ENCODE measurements at regions of chr2 and their contacts with region 1.

Region 1: GRCh38 chr2:68751397-68752339 is 17.1 kb downstream of the ARHGAP25 start:
- DNase-seq: peak; percentile 82 to 93 (median 89)
- H3K4me3 ChIP-seq: peak overlapping the region; percentile 11
- H3K4me3 Mint-ChIP-seq: peak overlapping the region; percentile 5 to 67 (median 50)
- H3K27ac ChIP-seq: no peak overlapping the region
- H3K27ac Mint-ChIP-seq: peak overlapping the region; percentile 66 to 97 (median 92)
- H3K4me1 ChIP-seq: peaks cover 91% of the 10 kb centered on the region
- H3K4me1 Mint-ChIP-seq: peaks cover 85 to 95% (median 94%) of the 10 kb centered on the region in 3 donors
- H3K27me3 ChIP-seq: no peaks in the 10 kb centered on the region
- H3K27me3 Mint-ChIP-seq: no peaks in the 10 kb centered on the region

Region 2: DNA sequence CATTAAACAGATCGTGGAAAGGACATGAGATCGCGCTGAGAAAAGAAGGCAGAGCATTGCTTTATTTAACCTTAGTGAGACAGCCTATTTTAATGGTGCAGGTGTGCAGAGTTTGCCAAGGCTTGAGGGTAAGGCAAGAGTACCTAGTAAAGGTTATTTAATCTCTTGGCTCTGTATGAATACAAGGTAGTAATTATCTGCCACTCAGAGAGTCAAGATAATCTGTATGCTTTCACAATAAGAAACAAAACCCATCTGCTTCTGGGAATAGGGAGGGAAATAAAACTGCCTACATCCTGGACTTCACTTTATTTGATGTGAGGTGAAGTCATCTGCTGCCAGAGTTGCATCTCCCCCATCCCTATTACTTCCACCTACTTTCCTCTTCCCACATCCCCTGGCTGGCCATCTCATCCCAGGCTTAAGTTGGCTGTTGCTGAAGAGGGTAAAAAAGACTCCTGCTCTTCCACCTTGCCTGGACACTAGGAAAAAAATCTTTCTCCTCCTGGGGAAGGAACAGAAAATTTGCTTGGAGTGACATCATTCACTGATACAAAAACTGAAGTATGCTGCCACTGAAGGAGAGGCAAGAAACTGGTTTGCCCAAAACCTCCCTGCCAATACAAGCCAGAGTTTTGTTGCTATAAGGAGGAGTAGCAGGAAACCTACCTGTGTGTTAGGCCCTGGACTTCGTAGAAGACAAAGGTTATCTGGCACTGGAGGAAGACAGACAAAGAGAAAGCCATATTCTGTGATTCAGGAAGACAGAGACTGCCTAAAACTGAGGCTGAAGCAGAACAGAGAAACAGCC is 52.9 kb before region 1 on chr2:
- CTCF ChIA-PET with region 1: no interaction called
- POLR2A ChIA-PET with region 1: no interaction called
- DNase-seq: no peak
- H3K4me3 ChIP-seq: no peak overlapping the region
- H3K4me3 Mint-ChIP-seq: no peak overlapping the region
- H3K27ac ChIP-seq: no peak overlapping the region
- H3K27ac Mint-ChIP-seq: no peak overlapping the region
- H3K4me1 ChIP-seq: no peaks in the 10 kb centered on the region
- H3K4me1 Mint-ChIP-seq: peaks cover 7 to 10% (median 10%) of the 10 kb centered on the region in 3 donors
- H3K27me3 ChIP-seq: no peaks in the 10 kb centered on the region
- H3K27me3 Mint-ChIP-seq: peaks cover 7 to 11% of the 10 kb centered on the region in 2 donors

Region 3: DNA sequence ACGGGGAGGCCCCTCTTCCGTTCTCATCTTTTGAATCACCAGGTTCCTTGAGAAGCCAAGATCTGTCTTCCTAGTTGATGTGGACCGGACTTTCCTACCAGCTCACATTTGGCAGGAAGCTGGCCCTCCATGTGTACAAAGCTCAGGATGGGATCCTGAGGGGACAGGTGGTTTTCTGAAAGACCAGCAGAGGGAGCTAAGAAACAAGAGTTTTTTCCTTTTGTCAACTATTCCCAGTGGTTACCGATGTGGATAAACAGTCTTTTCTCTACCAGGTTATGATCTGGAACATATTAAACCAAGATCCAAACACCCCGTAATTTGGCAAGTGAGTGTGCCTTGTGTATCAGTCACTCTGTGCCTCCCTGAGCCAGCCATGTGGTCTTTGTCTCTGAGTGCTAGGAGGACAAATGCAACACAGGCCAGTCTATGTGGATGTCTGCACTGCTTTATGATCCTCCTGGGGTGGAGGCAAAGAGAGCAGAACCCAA is 42.2 kb before region 1 on chr2:
- CTCF ChIA-PET with region 1: interaction called, 10 read pairs
- POLR2A ChIA-PET with region 1: no interaction called
- DNase-seq: no peak
- H3K4me3 ChIP-seq: no peak overlapping the region
- H3K4me3 Mint-ChIP-seq: no peak overlapping the region
- H3K27ac ChIP-seq: no peak overlapping the region
- H3K27ac Mint-ChIP-seq: peak overlapping the region in 3 of 8 donors; percentile 48 to 79 (median 69)
- H3K4me1 ChIP-seq: peaks cover 11% of the 10 kb centered on the region
- H3K4me1 Mint-ChIP-seq: peaks cover 9 to 10% (median 9%) of the 10 kb centered on the region in 3 donors
- H3K27me3 ChIP-seq: no peaks in the 10 kb centered on the region
- H3K27me3 Mint-ChIP-seq: peaks cover 0 to 3% of the 10 kb centered on the region in 2 donors

Region 4: GRCh38 chr2:68726608-68727367 is 24.9 kb before region 1 on chr2:
- CTCF ChIA-PET with region 1: interaction called, 12 read pairs
- POLR2A ChIA-PET with region 1: interaction called, 4 read pairs
- DNase-seq: peak; percentile 59 to 91 (median 77)
- H3K4me3 ChIP-seq: no peak overlapping the region
- H3K4me3 Mint-ChIP-seq: peak overlapping the region; percentile 39 to 81 (median 58)
- H3K27ac ChIP-seq: no peak overlapping the region
- H3K27ac Mint-ChIP-seq: peak overlapping the region; percentile 76 to 94 (median 90)
- H3K4me1 ChIP-seq: peaks cover 44% of the 10 kb centered on the region
- H3K4me1 Mint-ChIP-seq: peaks cover 57 to 89% (median 83%) of the 10 kb centered on the region in 3 donors
- H3K27me3 ChIP-seq: no peaks in the 10 kb centered on the region
- H3K27me3 Mint-ChIP-seq: no peaks in the 10 kb centered on the region

Region 5: GRCh38 chr2:68774569-68775271 is 23.1 kb after region 1 on chr2:
- CTCF ChIA-PET with region 1: interaction called, 110 read pairs
- POLR2A ChIA-PET with region 1: interaction called, 22 read pairs
- DNase-seq: peak; percentile 43 to 74 (median 53)
- H3K4me3 ChIP-seq: peak overlapping the region; percentile 65
- H3K4me3 Mint-ChIP-seq: peak overlapping the region; percentile 91 to 97 (median 95)
- H3K27ac ChIP-seq: peak overlapping the region; percentile 71
- H3K27ac Mint-ChIP-seq: peak overlapping the region; percentile 90 to 100 (median 97)
- H3K4me1 ChIP-seq: peaks cover 92% of the 10 kb centered on the region
- H3K4me1 Mint-ChIP-seq: peaks cover 86 to 91% (median 87%) of the 10 kb centered on the region in 3 donors
- H3K27me3 ChIP-seq: no peaks in the 10 kb centered on the region
- H3K27me3 Mint-ChIP-seq: no peaks in the 10 kb centered on the region

Region 6: GRCh38 chr2:68809324-68810240 is 57.9 kb after region 1 on chr2:
- CTCF ChIA-PET with region 1: interaction called, 41 read pairs
- POLR2A ChIA-PET with region 1: interaction called, 14 read pairs
- DNase-seq: no peak
- H3K4me3 ChIP-seq: no peak overlapping the region
- H3K4me3 Mint-ChIP-seq: peak overlapping the region in 1 of 7 donors; percentile 17
- H3K27ac ChIP-seq: no peak overlapping the region
- H3K27ac Mint-ChIP-seq: peak overlapping the region in 7 of 8 donors; percentile 70 to 98 (median 91)
- H3K4me1 ChIP-seq: peaks cover 32% of the 10 kb centered on the region
- H3K4me1 Mint-ChIP-seq: peaks cover 28 to 63% (median 49%) of the 10 kb centered on the region in 3 donors
- H3K27me3 ChIP-seq: no peaks in the 10 kb centered on the region
- H3K27me3 Mint-ChIP-seq: no peaks in the 10 kb centered on the region

Region 7: GRCh38 chr2:68909793-68910674 is 158.4 kb after region 1 on chr2:
- CTCF ChIA-PET with region 1: interaction called, 22 read pairs
- POLR2A ChIA-PET with region 1: interaction called, 4 read pairs
- DNase-seq: peak; percentile 39 to 74 (median 54)
- H3K4me3 ChIP-seq: no peak overlapping the region
- H3K4me3 Mint-ChIP-seq: peak overlapping the region in 3 of 7 donors; percentile 28 to 42 (median 30)
- H3K27ac ChIP-seq: no peak overlapping the region
- H3K27ac Mint-ChIP-seq: peak overlapping the region; percentile 43 to 90 (median 82)
- H3K4me1 ChIP-seq: peaks cover 58% of the 10 kb centered on the region
- H3K4me1 Mint-ChIP-seq: peaks cover 34 to 39% (median 36%) of the 10 kb centered on the region in 3 donors
- H3K27me3 ChIP-seq: no peaks in the 10 kb centered on the region
- H3K27me3 Mint-ChIP-seq: no peaks in the 10 kb centered on the region

Region 8: GRCh38 chr2:69082430-69082997 is 330.8 kb after region 1 on chr2:
- CTCF ChIA-PET with region 1: no interaction called
- POLR2A ChIA-PET with region 1: no interaction called
- DNase-seq: no peak
- H3K4me3 ChIP-seq: no peak overlapping the region
- H3K4me3 Mint-ChIP-seq: no peak overlapping the region
- H3K27ac ChIP-seq: no peak overlapping the region
- H3K27ac Mint-ChIP-seq: no peak overlapping the region
- H3K4me1 ChIP-seq: no peaks in the 10 kb centered on the region
- H3K4me1 Mint-ChIP-seq: no peaks in the 10 kb centered on the region
- H3K27me3 ChIP-seq: no peaks in the 10 kb centered on the region
- H3K27me3 Mint-ChIP-seq: peaks cover 10 to 57% of the 10 kb centered on the region in 2 donors

Region 9: DNA sequence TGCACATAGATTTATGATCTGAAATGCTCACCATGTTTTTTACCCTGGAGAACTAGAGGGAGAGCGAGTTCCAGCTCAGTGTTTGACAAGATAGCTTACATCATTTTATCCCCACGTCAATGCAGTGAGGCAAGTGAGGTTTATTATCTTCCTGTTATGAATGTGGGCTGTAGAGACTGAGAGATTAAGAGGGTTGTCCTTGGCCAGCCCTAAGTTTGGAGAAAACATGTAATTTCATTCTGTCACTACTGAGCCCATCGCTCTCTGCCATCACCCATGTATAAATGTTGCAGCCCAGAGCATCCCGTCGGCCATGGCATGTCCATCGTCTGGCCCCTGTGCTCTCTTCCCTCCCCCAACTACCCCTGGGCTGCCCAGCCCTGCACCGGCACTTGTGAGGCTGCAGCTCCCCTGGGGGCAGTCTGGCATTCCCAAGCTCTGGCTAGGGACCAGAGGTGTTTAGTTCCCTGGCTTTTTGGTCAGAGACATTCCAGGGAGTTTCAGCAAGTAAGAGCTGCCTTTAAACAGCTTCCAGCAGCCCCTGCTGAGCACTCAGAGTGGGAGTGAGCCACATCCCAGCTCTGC is 398.1 kb after region 1 on chr2:
- CTCF ChIA-PET with region 1: no interaction called
- POLR2A ChIA-PET with region 1: no interaction called
- DNase-seq: no peak
- H3K4me3 ChIP-seq: no peak overlapping the region
- H3K4me3 Mint-ChIP-seq: no peak overlapping the region
- H3K27ac ChIP-seq: no peak overlapping the region
- H3K27ac Mint-ChIP-seq: no peak overlapping the region
- H3K4me1 ChIP-seq: no peaks in the 10 kb centered on the region
- H3K4me1 Mint-ChIP-seq: no peaks in the 10 kb centered on the region
- H3K27me3 ChIP-seq: no peaks in the 10 kb centered on the region
- H3K27me3 Mint-ChIP-seq: peaks cover 6 to 23% of the 10 kb centered on the region in 2 donors